ENCODE measurements at regions of chr5 and their contacts with region 1.

Region 1: GRCh38 chr5:73498057-73499008 is at the start of gene BTF3:
- DNase-seq: peak; percentile 96
- ATAC-seq: peak; percentile 95
- H3K4me3 Mint-ChIP-seq: peak within 1 kb of the TSS; percentile 96
- H3K27ac Mint-ChIP-seq: peak within 1 kb of the TSS; percentile 100
- H3K4me1 Mint-ChIP-seq: peaks cover 35% of the 10 kb centered on the region
- H3K27me3 Mint-ChIP-seq: no peaks in the 10 kb centered on the region
- CTCF ChIP-seq: no peak
- total RNA-seq, gene BTF3: 1,122 to 1,184 TPM

Region 2: DNA sequence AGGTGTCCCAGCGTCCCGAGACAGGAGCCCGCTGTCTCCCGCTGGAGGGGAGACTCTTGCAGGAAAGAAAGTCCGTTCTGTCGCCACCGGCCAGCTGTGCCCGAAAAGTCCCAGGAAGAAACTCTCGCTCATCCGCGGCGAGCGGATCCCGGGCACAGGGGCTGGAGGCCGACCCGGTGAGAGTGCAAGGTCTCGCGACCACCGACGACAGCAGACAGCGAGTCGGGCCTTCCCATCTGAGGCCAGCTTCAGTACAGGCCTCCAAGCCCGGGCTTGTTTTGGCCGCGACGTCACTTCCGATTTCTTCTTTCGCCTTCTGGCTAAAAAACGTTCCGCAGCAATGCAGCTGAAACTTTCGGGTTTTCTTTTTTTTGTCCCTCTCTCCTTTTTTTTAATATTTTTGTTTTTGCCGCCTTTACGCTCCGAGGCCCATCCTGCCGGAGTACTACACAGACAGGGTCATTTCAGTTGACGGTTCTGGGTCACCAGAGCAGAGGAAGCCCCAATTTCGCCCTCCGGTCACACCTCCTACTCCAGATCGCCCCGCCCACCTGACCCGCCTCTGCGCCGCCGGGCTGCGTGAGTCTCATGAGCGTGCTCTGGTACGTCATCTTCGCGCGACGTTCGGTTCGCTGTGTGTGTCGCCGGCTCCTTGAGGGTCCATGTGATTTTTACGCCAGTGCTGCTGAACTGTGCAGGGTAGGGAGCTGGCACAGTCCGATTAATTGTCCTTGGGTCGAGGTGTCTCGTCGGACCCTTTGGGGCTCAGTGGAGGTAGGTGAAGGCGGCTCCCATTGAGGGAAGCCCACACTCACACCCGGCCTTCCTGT is 67.0 kb after region 1 on chr5 and contains the starts of genes ANKRA2 and UTP15:
- CTCF ChIA-PET with region 1: interaction called, 4 read pairs
- POLR2A ChIA-PET with region 1: interaction called, 14 read pairs
- intact Hi-C with region 1: no loop called
- DNase-seq: peak; percentile 100
- ATAC-seq: peak; percentile 94
- H3K4me3 Mint-ChIP-seq: peak within 1 kb of the TSS; percentile 99
- H3K27ac Mint-ChIP-seq: peak within 1 kb of the TSS; percentile 100
- H3K4me1 Mint-ChIP-seq: peaks cover 43% of the 10 kb centered on the region
- H3K27me3 Mint-ChIP-seq: no peaks in the 10 kb centered on the region
- CTCF ChIP-seq: no peak
- total RNA-seq, gene ANKRA2: 20.2 to 22.0 TPM
- total RNA-seq, gene UTP15: 30.6 to 34.6 TPM